Esophagus muscularis mucosa (tissue), 4 donors: ENCODE measurements at regions of chr2 and their contacts with region 1.

Region 1: DNA sequence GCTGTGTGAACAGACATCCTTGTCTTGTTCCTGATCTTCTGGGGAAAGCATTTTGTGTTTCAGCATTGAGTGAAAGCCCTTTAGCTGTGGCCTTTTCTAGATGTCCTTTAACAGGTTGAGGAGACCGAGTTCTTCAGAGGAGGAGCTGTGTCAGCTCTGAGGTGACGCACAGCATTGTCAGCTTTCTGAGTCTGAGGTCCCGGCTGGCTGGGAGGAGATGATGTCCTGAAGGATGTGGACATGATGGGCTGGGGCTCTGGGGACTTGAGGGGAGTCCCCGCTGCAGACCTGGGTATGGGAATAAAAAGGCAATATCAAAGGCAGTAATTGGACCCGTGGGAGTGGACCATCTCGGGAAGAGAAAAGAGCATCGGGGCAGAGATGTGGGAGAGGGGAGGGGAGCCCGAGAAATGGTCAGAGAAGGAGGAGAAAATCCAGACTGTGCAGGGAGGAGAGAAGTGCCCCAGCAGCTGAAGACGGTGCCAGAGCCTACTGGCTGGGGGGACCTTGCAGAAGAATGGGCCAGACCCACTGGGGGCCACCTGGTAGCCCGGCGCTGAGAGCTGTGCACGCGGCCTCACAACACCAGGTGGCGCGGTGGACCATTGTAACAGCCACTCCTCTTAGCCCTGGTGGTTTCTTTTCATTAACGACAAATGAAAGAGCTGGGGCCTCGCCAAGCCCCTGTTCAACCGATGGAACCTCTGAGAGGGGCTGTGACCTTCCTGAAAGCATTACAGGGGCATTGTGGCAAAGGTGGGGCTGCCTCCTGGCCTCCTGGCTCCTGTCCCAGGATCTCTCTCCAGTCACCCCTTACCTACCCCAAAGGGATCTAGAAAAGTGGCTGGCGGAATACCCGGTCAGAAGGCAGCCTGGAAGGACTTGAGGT is 61.6 kb downstream of the ST3GAL5 start:
- DNase-seq: peak; percentile 93
- H3K4me3 ChIP-seq: peak overlapping the region; percentile 14 to 42 (median 22)
- H3K27ac ChIP-seq: no peak overlapping the region
- H3K4me1 ChIP-seq: peaks cover 7 to 13% (median 9%) of the 10 kb centered on the region in 4 donors
- H3K27me3 ChIP-seq: no peaks in the 10 kb centered on the region
- CTCF ChIP-seq: peak; percentile 91 to 96 (median 93)
- EP300 ChIP-seq: no peak
- POLR2A ChIP-seq: no peak

Region 2: DNA sequence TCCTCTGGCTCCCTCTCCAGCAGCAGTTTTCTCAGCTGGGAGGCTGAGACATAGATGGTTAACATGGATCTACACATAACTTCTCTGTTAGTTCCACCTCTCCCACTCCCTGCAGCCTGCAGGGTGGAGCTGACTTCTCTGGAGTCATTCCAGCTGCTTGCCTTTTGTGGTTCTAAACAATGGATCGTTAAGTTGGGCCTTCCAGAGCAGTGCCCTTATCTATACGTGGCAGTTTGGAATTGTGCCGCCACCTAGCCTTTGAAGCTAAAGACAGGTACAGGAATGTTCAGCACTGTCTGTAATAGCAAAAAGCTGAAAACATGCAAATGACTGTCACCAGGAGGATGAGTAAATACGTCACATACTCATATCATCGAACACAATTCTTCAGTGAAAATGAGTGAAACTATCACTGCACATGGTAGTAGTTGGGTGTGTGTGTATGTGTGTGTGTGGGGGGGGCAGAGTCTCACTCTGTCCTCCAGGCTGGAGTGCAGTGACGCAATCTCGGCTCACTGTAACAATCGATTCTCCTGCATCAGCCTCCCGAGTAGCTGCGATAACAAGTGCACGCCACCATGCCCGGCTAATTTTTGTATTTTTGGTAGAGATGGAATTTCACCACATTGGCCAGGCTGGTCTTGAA is 358.4 kb before region 1 on chr2:
- intact Hi-C with region 1: no loop called
- DNase-seq: no peak
- H3K4me3 ChIP-seq: no peak overlapping the region
- H3K27ac ChIP-seq: peak overlapping the region in 1 of 4 donors; percentile 36
- H3K4me1 ChIP-seq: peaks cover 7 to 27% (median 26%) of the 10 kb centered on the region in 4 donors
- H3K27me3 ChIP-seq: no peaks in the 10 kb centered on the region
- CTCF ChIP-seq: no peak
- EP300 ChIP-seq: no peak
- POLR2A ChIP-seq: no peak

Region 3: DNA sequence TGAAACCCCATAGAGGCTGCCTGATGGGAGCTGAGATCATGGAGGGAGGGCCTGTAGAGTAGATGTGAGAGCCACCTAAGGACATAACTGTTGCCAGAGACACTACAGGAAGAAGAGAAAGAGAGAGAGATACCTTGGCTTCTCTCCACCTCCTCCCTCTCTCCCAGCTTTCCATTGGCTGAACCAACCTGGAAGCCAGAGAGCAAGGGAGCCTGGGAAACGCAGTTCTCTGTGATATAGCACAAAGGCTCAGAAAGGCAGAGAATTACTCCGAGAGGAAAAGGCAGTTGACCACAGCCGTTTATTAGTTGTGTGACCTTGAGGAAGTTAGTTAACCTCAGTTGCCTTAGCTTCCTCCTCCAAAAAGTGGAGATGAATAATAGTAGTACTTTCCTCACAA is 326.0 kb before region 1 on chr2:
- intact Hi-C with region 1: no loop called
- DNase-seq: no peak
- H3K4me3 ChIP-seq: no peak overlapping the region
- H3K27ac ChIP-seq: peak overlapping the region in 1 of 4 donors; percentile 18
- H3K4me1 ChIP-seq: peaks cover 8 to 32% (median 28%) of the 10 kb centered on the region in 4 donors
- H3K27me3 ChIP-seq: no peaks in the 10 kb centered on the region
- CTCF ChIP-seq: no peak
- EP300 ChIP-seq: no peak
- POLR2A ChIP-seq: no peak

Region 4: DNA sequence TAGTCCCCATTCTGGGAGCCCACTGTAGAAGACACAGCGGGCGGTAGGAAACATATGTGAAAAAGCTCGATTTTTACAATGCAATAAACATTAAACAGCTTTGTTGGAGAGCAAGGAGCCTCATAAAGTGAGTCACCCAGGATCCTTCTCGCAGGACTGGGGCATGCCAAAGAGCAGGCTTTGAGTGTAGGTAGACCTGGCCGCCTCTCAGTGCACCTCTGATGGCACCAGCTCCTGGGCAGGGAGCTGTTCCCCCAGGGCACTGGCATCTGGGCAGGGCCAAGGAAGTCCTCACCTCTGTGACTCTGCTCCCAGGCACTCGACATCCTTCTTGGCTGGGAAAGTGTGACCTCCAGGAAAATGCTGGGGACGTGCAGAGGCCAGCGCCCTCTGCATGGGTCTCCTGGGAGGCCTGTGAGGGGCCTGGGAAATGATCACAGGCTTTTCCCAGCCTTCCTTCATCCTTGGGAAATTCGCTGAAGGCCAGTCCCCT is 184.3 kb after region 1 on chr2:
- intact Hi-C with region 1: no loop called
- DNase-seq: no peak
- H3K4me3 ChIP-seq: no peak overlapping the region
- H3K27ac ChIP-seq: no peak overlapping the region
- H3K4me1 ChIP-seq: no peaks in the 10 kb centered on the region
- H3K27me3 ChIP-seq: no peaks in the 10 kb centered on the region
- CTCF ChIP-seq: no peak
- EP300 ChIP-seq: no peak
- POLR2A ChIP-seq: no peak

Region 5: GRCh38 chr2:86072271-86072858 is 245.1 kb after region 1 on chr2:
- intact Hi-C with region 1: loop called (anchors 2 kb)
- DNase-seq: no peak
- H3K4me3 ChIP-seq: no peak overlapping the region
- H3K27ac ChIP-seq: peak overlapping the region; percentile 52 to 67 (median 58)
- H3K4me1 ChIP-seq: peaks cover 13 to 42% (median 39%) of the 10 kb centered on the region in 4 donors
- H3K27me3 ChIP-seq: no peaks in the 10 kb centered on the region
- CTCF ChIP-seq: no peak
- EP300 ChIP-seq: no peak
- POLR2A ChIP-seq: no peak

Region 6: DNA sequence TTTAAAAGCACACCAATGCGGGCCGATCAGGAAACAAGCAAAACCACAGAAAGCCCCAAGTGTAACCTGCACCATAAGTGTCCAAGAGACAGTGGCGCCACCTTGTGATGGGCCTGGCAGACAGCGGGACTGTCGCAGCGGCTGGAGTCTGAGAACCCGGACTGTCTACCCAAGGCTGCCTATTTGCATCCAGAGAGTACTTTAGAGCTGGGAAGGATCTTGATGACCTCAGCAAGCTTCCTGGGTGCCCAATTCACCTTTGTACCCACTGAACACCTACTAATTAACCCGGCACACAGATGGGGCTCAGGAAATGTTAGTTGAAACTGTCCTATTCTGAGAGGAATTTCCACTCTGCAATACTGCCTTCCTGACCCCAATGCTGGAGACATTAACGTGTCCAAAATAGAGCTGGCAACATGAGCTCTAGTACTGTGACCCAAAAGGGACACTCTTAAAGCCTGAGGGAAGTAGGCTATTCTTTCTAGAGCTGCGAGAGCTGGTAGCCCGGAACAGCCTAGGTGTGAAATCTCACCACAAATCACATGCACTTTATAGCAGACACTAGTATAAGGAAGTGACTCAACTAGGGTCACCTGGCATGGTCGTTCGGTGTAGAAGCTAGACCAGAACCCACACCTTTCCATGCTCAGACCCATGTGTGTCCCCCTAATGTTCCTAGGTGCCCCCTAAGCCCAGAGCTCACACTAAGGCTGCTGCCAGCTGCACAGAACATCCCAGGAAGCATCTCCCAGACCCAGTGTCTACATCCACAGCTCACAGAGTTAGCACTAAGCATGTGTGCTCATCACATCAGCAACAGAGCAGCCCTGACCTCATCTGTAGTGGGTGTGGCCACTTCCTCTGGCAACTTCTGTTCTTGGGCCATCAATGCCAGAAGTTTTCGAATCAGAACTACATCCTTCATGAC is 253.0 kb after region 1 on chr2:
- intact Hi-C with region 1: loop called (anchors 2 kb)
- DNase-seq: no peak
- H3K4me3 ChIP-seq: no peak overlapping the region
- H3K27ac ChIP-seq: no peak overlapping the region
- H3K4me1 ChIP-seq: peaks cover 8 to 39% (median 26%) of the 10 kb centered on the region in 4 donors
- H3K27me3 ChIP-seq: no peaks in the 10 kb centered on the region
- CTCF ChIP-seq: peak; percentile 75 to 84 (median 81)
- EP300 ChIP-seq: no peak
- POLR2A ChIP-seq: no peak